Breast epithelium (tissue), 4 donors: ENCODE measurements at regions of chr2 and their contacts with region 1.

Region 1: GRCh38 chr2:221372159-221372884 is 199.8 kb downstream of the EPHA4 start:
- DNase-seq: no peak
- H3K4me3 ChIP-seq: no peak overlapping the region
- H3K27ac ChIP-seq: no peak overlapping the region
- H3K4me1 ChIP-seq: no peaks in the 10 kb centered on the region
- H3K27me3 ChIP-seq: no peaks in the 10 kb centered on the region
- CTCF ChIP-seq: no peak
- POLR2A ChIP-seq: no peak

Region 2: GRCh38 chr2:220556658-220557057 is 815.7 kb before region 1 on chr2:
- intact Hi-C with region 1: no loop called
- DNase-seq: no peak
- H3K4me3 ChIP-seq: no peak overlapping the region
- H3K27ac ChIP-seq: no peak overlapping the region
- H3K4me1 ChIP-seq: no peaks in the 10 kb centered on the region
- H3K27me3 ChIP-seq: no peaks in the 10 kb centered on the region
- CTCF ChIP-seq: no peak
- POLR2A ChIP-seq: no peak

Region 3: DNA sequence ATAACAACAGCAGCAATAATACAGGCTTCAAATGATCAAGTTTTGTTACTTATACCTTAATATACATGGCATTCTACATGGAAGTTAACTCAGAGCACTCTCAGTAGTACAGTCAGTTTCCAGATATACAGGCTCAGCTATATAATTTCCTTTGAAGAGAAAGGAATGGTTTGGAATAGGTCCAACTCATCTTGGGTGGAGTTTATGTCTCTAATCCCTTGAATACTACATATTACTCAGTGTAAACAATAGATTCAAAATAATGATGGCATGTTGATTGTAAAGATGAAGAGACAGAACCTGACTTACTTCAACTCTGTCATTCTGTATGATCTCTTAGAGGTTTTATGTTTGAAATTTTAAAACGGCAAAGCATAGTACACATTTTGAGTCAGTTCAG is 24.9 kb after region 1 on chr2:
- intact Hi-C with region 1: loop called (anchors 2 kb)
- DNase-seq: no peak
- H3K4me3 ChIP-seq: no peak overlapping the region
- H3K27ac ChIP-seq: no peak overlapping the region
- H3K4me1 ChIP-seq: no peaks in the 10 kb centered on the region
- H3K27me3 ChIP-seq: no peaks in the 10 kb centered on the region
- CTCF ChIP-seq: no peak
- POLR2A ChIP-seq: no peak

Region 4: DNA sequence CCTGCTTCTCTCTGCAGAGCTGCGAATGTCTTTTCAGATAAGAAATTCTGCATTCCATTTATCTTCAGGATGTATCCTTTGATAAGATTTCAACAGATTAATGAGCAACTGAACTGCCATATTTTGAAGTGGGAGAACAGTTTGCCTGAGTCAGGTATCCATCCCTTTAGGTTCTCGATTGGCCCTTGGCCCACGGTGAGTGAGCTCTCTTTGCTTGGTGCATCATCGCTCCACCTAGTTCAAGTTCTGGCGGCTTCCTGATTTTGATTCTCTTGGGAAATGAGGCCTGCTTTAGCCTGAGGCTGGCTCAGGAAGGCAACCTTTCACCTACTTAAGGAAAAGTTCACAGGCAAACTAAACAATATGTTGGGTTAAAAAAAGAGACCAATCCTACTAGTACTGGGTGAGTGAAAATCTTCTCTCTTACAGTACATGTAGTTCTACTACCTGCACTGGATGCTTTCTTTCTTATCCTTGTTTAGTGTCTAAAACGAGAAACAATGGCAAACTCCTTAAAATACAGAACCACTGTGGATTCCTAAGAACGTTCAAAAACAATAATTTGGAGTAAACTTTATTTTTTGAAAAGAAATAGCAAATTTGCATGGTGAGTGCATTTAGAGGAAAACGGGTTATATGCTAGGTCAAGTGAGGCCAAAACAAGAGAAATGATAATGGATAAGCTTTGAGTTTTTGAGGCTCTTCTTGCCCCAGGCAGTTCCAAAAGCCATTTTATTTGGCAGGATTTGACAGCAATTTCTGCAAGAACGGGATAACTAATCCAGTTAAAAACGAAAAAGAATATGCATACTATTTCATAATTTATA is 1487.7 kb after region 1 on chr2:
- intact Hi-C with region 1: loop called (anchors 10 kb)
- DNase-seq: peak; percentile 68
- H3K4me3 ChIP-seq: peak overlapping the region; percentile 81 to 94 (median 90)
- H3K27ac ChIP-seq: peak overlapping the region; percentile 60 to 94
- H3K4me1 ChIP-seq: peaks cover 0 to 14% of the 10 kb centered on the region in 2 donors
- H3K27me3 ChIP-seq: no peaks in the 10 kb centered on the region
- CTCF ChIP-seq: no peak
- POLR2A ChIP-seq: no peak